ENCODE measurements at regions of chrX and their contacts with region 1.

Region 1: GRCh38 chrX:115147220-115147619 is 42.0 kb upstream of the RBMXL3 start:
- DNase-seq: no peak
- H3K4me3 ChIP-seq: no peak overlapping the region
- H3K27ac ChIP-seq: no peak overlapping the region
- H3K4me1 ChIP-seq: no peaks in the 10 kb centered on the region
- H3K27me3 ChIP-seq: no peaks in the 10 kb centered on the region
- CTCF ChIP-seq: peak; percentile 62

Region 2: GRCh38 chrX:114626323-114626722 is 520.9 kb before region 1 on chrX:
- intact Hi-C with region 1: loop called (anchors 5 kb)
- DNase-seq: no peak
- H3K4me3 ChIP-seq: no peak overlapping the region
- H3K27ac ChIP-seq: no peak overlapping the region
- H3K4me1 ChIP-seq: no peaks in the 10 kb centered on the region
- H3K27me3 ChIP-seq: no peaks in the 10 kb centered on the region
- CTCF ChIP-seq: peak; percentile 44

Region 3: DNA sequence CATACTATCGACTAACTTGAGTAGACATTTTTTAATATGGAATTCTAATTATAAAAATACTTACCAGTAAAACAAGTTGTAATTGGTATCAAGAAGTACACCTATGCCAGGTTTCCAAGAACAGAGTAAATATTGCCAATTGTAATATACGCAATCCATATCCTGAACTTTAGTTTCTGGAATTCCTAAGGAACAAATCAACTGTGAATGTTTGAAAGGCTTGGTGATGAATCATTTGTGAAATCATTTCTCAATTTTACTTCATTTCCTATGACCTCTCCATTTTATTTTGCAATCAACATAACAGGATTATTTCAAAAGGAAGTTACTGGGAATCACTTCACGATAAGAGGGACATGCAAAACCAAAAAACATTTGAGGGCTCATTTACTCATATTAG is 133.5 kb before region 1 on chrX:
- intact Hi-C with region 1: no loop called
- DNase-seq: no peak
- H3K4me3 ChIP-seq: no peak overlapping the region
- H3K27ac ChIP-seq: no peak overlapping the region
- H3K4me1 ChIP-seq: no peaks in the 10 kb centered on the region
- H3K27me3 ChIP-seq: no peaks in the 10 kb centered on the region
- CTCF ChIP-seq: no peak